ENCODE measurements at regions of chr16 and their contacts with region 1.

Region 1: DNA sequence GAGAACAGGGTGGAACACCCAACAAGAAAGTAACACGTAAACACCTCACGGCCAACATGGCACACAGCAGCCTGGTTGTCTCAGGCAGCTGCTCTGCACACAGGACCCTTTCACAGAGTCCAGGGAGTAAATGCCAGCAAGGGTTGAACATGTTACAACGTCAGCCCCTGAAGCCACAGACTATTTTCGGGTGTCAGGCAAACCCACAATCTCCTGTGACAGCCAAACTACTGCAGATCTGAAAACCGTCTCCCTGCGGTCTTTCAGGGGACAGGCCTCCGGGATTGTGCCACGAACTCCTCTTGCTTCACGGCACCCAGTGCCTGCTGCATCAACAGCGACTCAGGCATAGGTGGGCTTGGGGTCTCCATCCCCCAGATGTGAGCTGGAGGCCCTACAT is 127.7 kb downstream of the XYLT1 start:
- DNase-seq: peak; percentile 58
- H3K4me3 Mint-ChIP-seq: peak overlapping the region; percentile 61
- H3K27ac Mint-ChIP-seq: peak overlapping the region; percentile 58
- H3K4me1 Mint-ChIP-seq: peaks cover 77% of the 10 kb centered on the region
- H3K27me3 Mint-ChIP-seq: no peaks in the 10 kb centered on the region

Region 2: DNA sequence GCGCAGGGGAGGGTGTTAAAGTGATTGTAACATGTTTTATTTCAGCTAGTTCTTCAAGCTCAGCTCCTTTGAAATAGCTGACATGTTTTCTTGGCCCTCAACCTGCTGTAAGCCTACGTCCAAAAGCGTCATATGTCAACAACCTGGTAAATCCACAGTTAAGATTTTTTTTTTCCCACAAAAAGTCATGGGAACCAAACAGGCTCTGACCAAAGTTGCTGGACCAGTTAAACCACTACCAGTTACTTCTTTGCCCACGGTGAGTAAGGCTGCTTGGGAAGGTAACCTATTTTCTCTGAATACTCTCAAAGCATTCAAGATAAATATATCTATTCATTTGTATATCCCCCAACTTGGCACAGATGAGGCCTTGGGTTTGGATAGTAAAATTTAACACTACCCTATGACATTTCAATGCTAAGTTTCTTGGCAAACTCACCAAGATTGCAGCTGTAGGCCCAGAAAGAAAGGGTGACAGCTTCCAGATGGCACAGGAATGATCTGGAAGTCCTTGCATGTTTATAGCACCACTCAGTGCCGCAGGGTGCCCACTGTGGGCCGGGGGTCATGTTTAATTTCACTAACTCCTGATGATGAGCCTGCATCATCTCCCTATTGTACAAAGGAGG is 38.4 kb before region 1 on chr16:
- intact Hi-C with region 1: loop called (anchors 5 kb)
- DNase-seq: no peak
- H3K4me3 Mint-ChIP-seq: no peak overlapping the region
- H3K27ac Mint-ChIP-seq: no peak overlapping the region
- H3K4me1 Mint-ChIP-seq: peaks cover 46% of the 10 kb centered on the region
- H3K27me3 Mint-ChIP-seq: peaks cover 2% of the 10 kb centered on the region

Region 3: GRCh38 chr16:17364319-17365210 is 21.5 kb after region 1 on chr16:
- intact Hi-C with region 1: loop called (anchors 1 kb)
- DNase-seq: peak; percentile 57
- H3K4me3 Mint-ChIP-seq: peak overlapping the region; percentile 34
- H3K27ac Mint-ChIP-seq: peak overlapping the region; percentile 59
- H3K4me1 Mint-ChIP-seq: peaks cover 97% of the 10 kb centered on the region
- H3K27me3 Mint-ChIP-seq: no peaks in the 10 kb centered on the region

Region 4: GRCh38 chr16:17369421-17370222 is 26.6 kb after region 1 on chr16:
- intact Hi-C with region 1: loop called (anchors 1 kb)
- DNase-seq: peak; percentile 72
- H3K4me3 Mint-ChIP-seq: peak overlapping the region; percentile 83
- H3K27ac Mint-ChIP-seq: peak overlapping the region; percentile 93
- H3K4me1 Mint-ChIP-seq: peaks cover 88% of the 10 kb centered on the region
- H3K27me3 Mint-ChIP-seq: no peaks in the 10 kb centered on the region

Region 5: DNA sequence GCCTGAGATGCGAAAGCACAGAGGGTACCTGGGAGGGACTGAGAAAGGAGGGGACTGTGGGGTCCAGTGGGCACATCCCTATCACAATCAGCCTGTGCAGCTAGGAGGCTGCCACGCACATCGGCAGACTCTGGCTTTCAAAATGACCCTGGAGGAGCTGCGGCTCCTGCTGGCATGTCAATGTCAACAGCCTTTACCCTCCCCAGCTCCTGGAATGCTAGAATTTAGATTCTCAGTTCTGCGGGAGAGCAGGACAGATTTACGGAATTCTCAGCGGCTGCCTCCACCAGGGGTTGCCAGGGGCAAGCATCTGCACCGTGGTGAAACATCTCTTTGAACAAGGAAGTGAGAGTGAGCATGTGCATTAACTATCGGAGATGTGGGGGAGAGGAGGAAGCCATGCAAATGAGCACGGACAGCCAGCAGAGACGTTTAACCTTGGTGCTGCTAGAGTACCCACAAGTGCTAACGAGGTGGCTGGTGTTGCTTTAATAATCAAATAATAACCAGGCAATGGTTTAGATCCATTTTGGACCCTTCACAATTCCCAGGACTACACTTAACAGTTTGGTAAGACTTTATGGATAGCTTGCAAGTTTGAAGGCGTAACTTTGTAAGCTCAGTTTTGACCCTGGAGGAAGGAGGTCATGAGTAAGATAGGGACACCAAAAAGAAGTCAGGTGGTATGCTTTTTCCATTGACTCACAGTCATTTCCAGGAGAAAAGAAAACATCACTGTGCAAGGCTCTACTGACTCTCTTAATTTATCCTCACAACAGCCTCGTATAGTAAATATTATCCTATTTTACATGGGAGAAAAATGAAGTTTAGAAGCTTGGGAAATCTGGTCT is 73.7 kb after region 1 on chr16:
- intact Hi-C with region 1: loop called (anchors 1 kb)
- DNase-seq: peak; percentile 40
- H3K4me3 Mint-ChIP-seq: peak overlapping the region; percentile 82
- H3K27ac Mint-ChIP-seq: peak overlapping the region; percentile 97
- H3K4me1 Mint-ChIP-seq: peaks cover 46% of the 10 kb centered on the region
- H3K27me3 Mint-ChIP-seq: no peaks in the 10 kb centered on the region

Region 6: GRCh38 chr16:17457513-17457912 is 114.5 kb after region 1 on chr16:
- intact Hi-C with region 1: no loop called
- DNase-seq: no peak
- H3K4me3 Mint-ChIP-seq: no peak overlapping the region
- H3K27ac Mint-ChIP-seq: no peak overlapping the region
- H3K4me1 Mint-ChIP-seq: peaks cover 32% of the 10 kb centered on the region
- H3K27me3 Mint-ChIP-seq: no peaks in the 10 kb centered on the region

Region 7: DNA sequence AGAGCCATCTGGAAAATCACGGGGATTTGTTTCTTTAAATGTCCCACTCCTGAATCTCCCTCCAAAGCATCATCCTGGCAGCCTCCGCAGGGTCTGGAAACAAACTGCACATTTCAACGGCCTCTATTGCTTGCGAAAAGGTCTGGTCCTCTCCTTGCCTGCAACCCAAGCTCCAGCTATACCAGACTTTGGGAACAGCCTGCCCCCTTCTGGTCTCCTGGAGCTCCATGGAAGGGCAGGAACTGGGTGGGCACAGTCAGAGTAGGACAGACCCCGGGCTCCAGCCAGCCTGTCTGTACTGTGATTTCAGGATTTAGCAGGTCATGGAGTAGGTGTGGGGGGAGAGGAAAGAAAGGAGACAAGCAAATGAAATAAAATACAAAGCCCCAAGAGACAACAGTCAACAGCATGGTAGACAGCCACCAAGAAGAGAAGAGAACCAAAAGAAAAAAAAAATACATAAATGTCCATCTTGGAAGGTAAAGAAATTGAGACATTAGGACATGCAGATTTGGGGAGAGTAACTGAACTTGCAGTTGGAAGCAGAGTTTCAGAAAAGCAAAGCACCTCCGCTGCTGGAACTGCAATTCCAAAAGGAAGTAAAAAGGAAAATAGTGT is 125.0 kb after region 1 on chr16:
- intact Hi-C with region 1: loop called (anchors 1 kb)
- DNase-seq: no peak
- H3K4me3 Mint-ChIP-seq: peak overlapping the region; percentile 93
- H3K27ac Mint-ChIP-seq: peak overlapping the region; percentile 4
- H3K4me1 Mint-ChIP-seq: peaks cover 59% of the 10 kb centered on the region
- H3K27me3 Mint-ChIP-seq: no peaks in the 10 kb centered on the region

Region 8: GRCh38 chr16:17590719-17591654 is 248.0 kb after region 1 on chr16:
- intact Hi-C with region 1: no loop called
- DNase-seq: peak; percentile 25
- H3K4me3 Mint-ChIP-seq: no peak overlapping the region
- H3K27ac Mint-ChIP-seq: peak overlapping the region; percentile 65
- H3K4me1 Mint-ChIP-seq: no peaks in the 10 kb centered on the region
- H3K27me3 Mint-ChIP-seq: peaks cover 3% of the 10 kb centered on the region